ENCODE measurements at regions of chr18 and their contacts with region 1.

Region 1: GRCh38 chr18:7291046-7291445 is 60.2 kb downstream of the LRRC30 start:
- DNase-seq: no peak
- ATAC-seq: no peak
- H3K4me3 ChIP-seq: no peak overlapping the region
- H3K27ac ChIP-seq: no peak overlapping the region
- H3K4me1 ChIP-seq: no peaks in the 10 kb centered on the region
- H3K27me3 ChIP-seq: no peaks in the 10 kb centered on the region

Region 2: GRCh38 chr18:7307526-7307925 is 16.5 kb after region 1 on chr18:
- intact Hi-C with region 1: no loop called
- DNase-seq: no peak
- ATAC-seq: no peak
- H3K4me3 ChIP-seq: no peak overlapping the region
- H3K27ac ChIP-seq: no peak overlapping the region
- H3K4me1 ChIP-seq: no peaks in the 10 kb centered on the region
- H3K27me3 ChIP-seq: peaks cover 0 to 1% of the 10 kb centered on the region in 2 donors

Region 3: DNA sequence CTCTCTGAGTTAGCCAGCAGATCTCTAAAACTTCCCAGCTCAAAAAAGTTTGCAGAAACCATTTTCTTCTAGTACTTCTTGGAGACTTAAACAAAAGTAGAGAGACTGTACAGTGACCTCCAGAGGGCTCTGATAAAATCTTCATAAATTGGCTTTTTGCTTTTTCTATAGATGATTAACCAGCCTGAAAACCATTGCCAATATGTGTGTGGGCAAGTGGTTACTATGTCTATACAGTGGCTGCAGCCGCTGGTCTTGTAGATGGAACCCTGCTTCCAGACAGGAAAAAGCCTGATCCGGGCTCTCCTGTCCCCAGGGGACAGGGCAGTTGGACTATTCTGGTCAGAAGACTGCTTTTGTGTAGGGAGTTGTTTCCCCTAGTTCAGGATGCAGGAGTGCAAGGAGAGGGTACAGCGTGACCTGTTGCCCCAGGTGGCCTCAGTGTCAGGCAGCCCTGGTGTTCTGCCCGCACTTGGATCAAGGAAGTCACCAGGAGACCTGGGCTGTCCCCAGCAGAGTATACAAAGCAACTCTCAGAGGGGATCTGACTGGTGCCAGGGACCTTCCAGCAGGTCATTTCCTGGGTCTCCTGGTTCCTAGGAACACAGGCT is 268.8 kb after region 1 on chr18:
- intact Hi-C with region 1: loop called in 1 of 2 experiments (anchors 10 kb)
- DNase-seq: no peak
- ATAC-seq: no peak
- H3K4me3 ChIP-seq: no peak overlapping the region
- H3K27ac ChIP-seq: no peak overlapping the region
- H3K4me1 ChIP-seq: no peaks in the 10 kb centered on the region
- H3K27me3 ChIP-seq: no peaks in the 10 kb centered on the region

Measured in aorta (tissue), 5 donors.